Activated CD8-positive, alpha-beta T cell treated with anti-CD3 and anti-CD28 coated beads, Interleukin-2, amount 10 ng/mL, durations not matched to agents 7 days and 5 days (primary cell): ENCODE measurements at regions of chr5 and their contacts with region 1.

Region 1: DNA sequence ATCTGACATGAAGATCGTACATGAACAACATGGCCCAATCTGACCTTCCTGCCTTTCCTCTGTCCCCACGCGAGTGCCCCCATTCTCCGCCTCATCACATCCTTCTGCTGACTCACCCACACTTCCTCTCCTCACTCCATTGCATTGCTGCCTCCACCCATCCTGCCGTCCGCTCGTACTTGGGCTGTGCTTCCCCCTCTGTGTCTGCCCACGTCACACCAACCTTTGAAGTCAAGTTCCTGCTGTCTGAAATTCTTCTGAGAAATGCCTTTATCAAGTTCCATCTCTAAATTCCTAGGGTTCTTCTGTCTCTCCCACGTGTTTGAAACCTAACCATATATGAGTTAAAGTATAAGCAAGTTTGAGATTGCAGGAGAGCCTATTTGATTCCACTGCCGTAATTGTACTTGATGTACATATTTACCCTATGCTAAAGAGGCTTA is 18.0 kb upstream of the STARD4 start:
- DNase-seq: peak; percentile 91
- ATAC-seq: peak; percentile 100
- H3K4me3 Mint-ChIP-seq: peak overlapping the region; percentile 6
- H3K27ac Mint-ChIP-seq: peak overlapping the region; percentile 84
- H3K4me1 Mint-ChIP-seq: peaks cover 20% of the 10 kb centered on the region
- H3K27me3 Mint-ChIP-seq: peaks cover 2% of the 10 kb centered on the region

Region 2: GRCh38 chr5:111512375-111513130 is 17.8 kb before region 1 on chr5 and contains the start of gene STARD4:
- CTCF ChIA-PET with region 1: interaction called, 49 read pairs
- POLR2A ChIA-PET with region 1: interaction called, 15 read pairs
- DNase-seq: peak; percentile 96
- ATAC-seq: peak; percentile 95
- H3K4me3 Mint-ChIP-seq: peak within 1 kb of the TSS; percentile 98
- H3K27ac Mint-ChIP-seq: peak within 1 kb of the TSS; percentile 97
- H3K4me1 Mint-ChIP-seq: peaks cover 44% of the 10 kb centered on the region
- H3K27me3 Mint-ChIP-seq: no peaks in the 10 kb centered on the region
- total RNA-seq, gene STARD4: 52.3 to 55.9 TPM

Region 3: DNA sequence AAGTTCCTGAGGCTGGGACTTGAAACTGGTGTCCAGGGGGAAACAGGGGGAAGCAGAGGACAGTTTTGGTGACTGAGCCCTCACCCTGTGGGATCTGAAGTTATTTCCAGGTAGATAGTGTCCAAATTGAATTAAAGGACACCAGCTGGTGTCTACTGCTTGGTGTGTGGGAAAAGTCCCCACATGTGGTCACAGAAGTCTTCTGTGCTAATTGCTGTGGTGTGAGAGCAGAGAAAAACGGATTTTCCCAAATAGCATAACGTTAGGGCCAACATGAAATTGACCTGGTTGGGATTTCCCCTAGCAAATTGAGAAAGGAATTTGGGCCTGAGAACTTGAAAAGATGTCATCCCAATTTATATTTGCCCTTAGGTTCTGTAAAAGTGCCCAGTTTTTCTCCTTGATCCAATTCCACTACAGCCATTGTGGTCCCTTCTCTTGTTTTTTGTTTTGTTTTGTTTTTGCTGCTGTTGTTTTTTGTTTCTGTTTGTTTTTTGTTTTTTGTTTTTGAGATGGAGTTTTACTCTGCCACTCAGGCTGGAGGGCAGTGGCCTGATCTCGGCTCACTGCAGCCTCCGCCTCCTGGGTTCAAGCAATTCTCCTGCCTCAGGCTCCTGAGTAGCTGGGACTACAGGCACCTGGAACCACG is 12.3 kb before region 1 on chr5:
- CTCF ChIA-PET with region 1: interaction called, 20 read pairs
- POLR2A ChIA-PET with region 1: no interaction called
- DNase-seq: no peak
- ATAC-seq: no peak
- H3K4me3 Mint-ChIP-seq: no peak overlapping the region
- H3K27ac Mint-ChIP-seq: no peak overlapping the region
- H3K4me1 Mint-ChIP-seq: peaks cover 10% of the 10 kb centered on the region
- H3K27me3 Mint-ChIP-seq: peaks cover 3% of the 10 kb centered on the region

Region 4: GRCh38 chr5:111942661-111943401 is 412.5 kb after region 1 on chr5:
- CTCF ChIA-PET with region 1: no interaction called
- POLR2A ChIA-PET with region 1: no interaction called
- DNase-seq: no peak
- ATAC-seq: no peak
- H3K4me3 Mint-ChIP-seq: no peak overlapping the region
- H3K27ac Mint-ChIP-seq: no peak overlapping the region
- H3K4me1 Mint-ChIP-seq: no peaks in the 10 kb centered on the region
- H3K27me3 Mint-ChIP-seq: peaks cover 4% of the 10 kb centered on the region

Region 5: GRCh38 chr5:112160652-112161391 is 630.5 kb after region 1 on chr5:
- CTCF ChIA-PET with region 1: interaction called, 18 read pairs
- POLR2A ChIA-PET with region 1: no interaction called
- DNase-seq: peak; percentile 93
- ATAC-seq: peak; percentile 93
- H3K4me3 Mint-ChIP-seq: peak overlapping the region; percentile 90
- H3K27ac Mint-ChIP-seq: peak overlapping the region; percentile 83
- H3K4me1 Mint-ChIP-seq: peaks cover 27% of the 10 kb centered on the region
- H3K27me3 Mint-ChIP-seq: no peaks in the 10 kb centered on the region